Psoas muscle (tissue), 8 donors: ENCODE measurements at regions of chr10 and their contacts with region 1.

Region 1: DNA sequence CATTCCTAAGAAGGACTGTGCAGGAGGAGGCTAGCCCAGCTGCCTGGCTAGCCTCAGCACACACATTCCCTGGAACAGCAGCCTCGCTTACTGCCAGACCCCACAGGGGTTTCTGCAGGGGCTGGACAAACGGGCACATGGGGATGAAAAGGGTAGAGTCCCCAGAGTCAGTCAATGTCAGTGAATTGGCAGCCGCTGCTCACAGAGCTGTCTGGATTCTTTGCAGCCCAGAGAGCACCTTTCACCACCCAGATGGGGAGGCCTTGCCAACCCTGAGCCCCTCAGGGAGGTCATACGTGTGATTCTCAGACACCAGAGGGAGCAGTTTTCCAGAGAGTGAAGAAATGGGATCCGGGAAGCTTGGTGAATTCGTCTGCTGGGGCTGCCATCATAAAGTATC is 143.3 kb downstream of the KCNMA1 start:
- DNase-seq: no peak
- ATAC-seq: no peak
- H3K4me3 ChIP-seq: no peak overlapping the region
- H3K27ac ChIP-seq: no peak overlapping the region
- H3K4me1 ChIP-seq: peaks cover 66% of the 10 kb centered on the region
- H3K27me3 ChIP-seq: no peaks in the 10 kb centered on the region
- CTCF ChIP-seq: peak; percentile 31

Region 2: GRCh38 chr10:77391605-77392235 is 102.6 kb before region 1 on chr10:
- intact Hi-C with region 1: loop called in 1 of 2 experiments (anchors 5 kb)
- DNase-seq: peak; percentile 74 to 84
- ATAC-seq: peak; percentile 65 to 85 (median 70)
- H3K4me3 ChIP-seq: no peak overlapping the region
- H3K27ac ChIP-seq: peak overlapping the region; percentile 30
- H3K4me1 ChIP-seq: peaks cover 26% of the 10 kb centered on the region
- H3K27me3 ChIP-seq: no peaks in the 10 kb centered on the region
- CTCF ChIP-seq: peak; percentile 59

Region 3: DNA sequence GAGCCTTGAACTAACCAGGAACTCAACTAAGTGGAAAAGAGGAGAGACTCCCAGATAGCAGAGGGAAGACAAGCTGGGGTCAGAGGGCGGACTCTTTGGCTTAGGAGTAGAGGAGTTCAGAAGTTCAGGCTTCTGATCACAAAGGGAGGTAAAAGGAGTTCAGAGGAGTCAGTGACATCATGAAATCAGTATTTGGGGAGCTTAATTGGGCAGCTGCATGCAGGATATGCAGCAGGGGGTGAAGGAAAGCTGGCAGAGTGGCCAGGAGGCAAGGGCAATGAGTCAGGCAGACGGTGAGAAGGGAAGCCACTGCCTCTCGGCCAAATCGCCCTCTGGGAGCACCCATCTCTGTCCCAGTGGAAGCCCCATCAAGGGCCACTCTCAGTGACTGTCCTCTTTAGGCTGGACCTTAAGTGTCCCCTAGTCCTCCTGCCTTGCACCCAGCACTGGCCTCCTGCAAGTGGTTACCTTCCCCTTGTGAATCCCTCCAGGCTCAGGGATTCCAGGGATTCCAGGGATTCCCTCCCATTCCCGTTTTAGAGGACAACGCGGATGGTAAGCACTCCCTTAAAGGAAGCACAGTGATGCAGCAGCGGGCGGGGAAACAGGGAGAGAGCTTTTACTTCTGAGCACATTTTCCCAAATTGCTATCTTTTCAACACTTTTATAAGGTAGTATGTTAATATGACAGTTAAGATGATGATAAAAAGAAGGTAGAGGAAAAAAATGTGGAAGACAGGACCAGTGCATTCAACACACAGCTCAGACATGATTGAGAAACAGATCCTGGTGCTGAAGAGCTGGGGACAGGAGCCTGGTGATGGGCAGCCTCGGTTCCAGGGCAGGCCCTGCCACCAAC is 70.6 kb after region 1 on chr10:
- intact Hi-C with region 1: no loop called
- DNase-seq: no peak
- ATAC-seq: peak in 3 of 4 donors; percentile 28 to 51 (median 45)
- H3K4me3 ChIP-seq: no peak overlapping the region
- H3K27ac ChIP-seq: no peak overlapping the region
- H3K4me1 ChIP-seq: peaks cover 24% of the 10 kb centered on the region
- H3K27me3 ChIP-seq: no peaks in the 10 kb centered on the region
- CTCF ChIP-seq: no peak

Region 4: GRCh38 chr10:77586719-77587415 is 92.5 kb after region 1 on chr10:
- intact Hi-C with region 1: loop called in 1 of 2 experiments (anchors 2 kb)
- DNase-seq: peak; percentile 59 to 78
- ATAC-seq: peak; percentile 88 to 89 (median 89)
- H3K4me3 ChIP-seq: no peak overlapping the region
- H3K27ac ChIP-seq: peak overlapping the region; percentile 84
- H3K4me1 ChIP-seq: peaks cover 31% of the 10 kb centered on the region
- H3K27me3 ChIP-seq: no peaks in the 10 kb centered on the region
- CTCF ChIP-seq: peak; percentile 9